K562 (cell line): ENCODE measurements at regions of chr6 and their contacts with region 1.

Region 1: DNA sequence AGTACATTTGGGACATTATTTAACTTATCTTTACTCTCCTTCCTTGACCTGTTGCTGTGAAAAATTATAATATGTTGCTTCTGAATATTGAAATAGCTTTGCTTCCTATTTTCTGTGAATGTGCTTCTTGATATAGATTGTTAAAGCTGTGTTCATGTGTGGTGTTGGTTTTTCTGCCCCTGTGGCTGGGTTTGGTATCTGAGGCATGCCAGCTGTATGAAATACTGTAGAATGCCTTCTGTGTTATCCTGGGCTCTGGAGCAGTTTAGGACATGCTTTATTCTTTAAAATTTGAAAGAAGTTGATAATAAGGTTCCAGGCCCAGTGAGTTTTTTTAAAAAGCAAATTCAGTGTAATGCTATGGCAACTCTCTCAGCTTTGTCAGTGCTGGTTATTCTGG is 71.7 kb downstream of the HIVEP1 start:
- DNase-seq: no peak
- ATAC-seq: no peak; the same call in 2 of the 3 replicates
- H3K4me3 ChIP-seq: no peak overlapping the region
- H3K27ac ChIP-seq: no peak overlapping the region
- H3K4me1 ChIP-seq: no peaks in the 10 kb centered on the region
- H3K27me3 ChIP-seq: no peaks in the 10 kb centered on the region
- CTCF ChIP-seq: no peak
- EP300 ChIP-seq: no peak
- POLR2A ChIP-seq: no peak
- RAD21 ChIP-seq: no peak

Region 2: GRCh38 chr6:12065321-12066140 is 18.2 kb before region 1 on chr6:
- CTCF ChIA-PET with region 1: no interaction called
- POLR2A ChIA-PET with region 1: interaction called, 12 read pairs
- in situ Hi-C with region 1: no loop called
- intact Hi-C with region 1: no loop called
- DNase-seq: peak in 2 of 4 experiments; percentile 71 to 80
- ATAC-seq: peak; percentile 92
- H3K4me3 ChIP-seq: no peak overlapping the region
- H3K27ac ChIP-seq: peak overlapping the region; percentile 53; the same call in 2 of the 3 replicates
- H3K4me1 ChIP-seq: peaks cover 4 to 29% of the 10 kb centered on the region in 2 experiments; a peak in 4 of 5 replicates
- H3K27me3 ChIP-seq: no peaks in the 10 kb centered on the region
- CTCF ChIP-seq: no peak
- EP300 ChIP-seq: peak; percentile 63; the same call in 1 of the 2 replicates
- POLR2A ChIP-seq: no peak
- RAD21 ChIP-seq: no peak; a peak in 1 of 4 replicates